ENCODE measurements at regions of chr19 and their contacts with region 1.

Region 1: DNA sequence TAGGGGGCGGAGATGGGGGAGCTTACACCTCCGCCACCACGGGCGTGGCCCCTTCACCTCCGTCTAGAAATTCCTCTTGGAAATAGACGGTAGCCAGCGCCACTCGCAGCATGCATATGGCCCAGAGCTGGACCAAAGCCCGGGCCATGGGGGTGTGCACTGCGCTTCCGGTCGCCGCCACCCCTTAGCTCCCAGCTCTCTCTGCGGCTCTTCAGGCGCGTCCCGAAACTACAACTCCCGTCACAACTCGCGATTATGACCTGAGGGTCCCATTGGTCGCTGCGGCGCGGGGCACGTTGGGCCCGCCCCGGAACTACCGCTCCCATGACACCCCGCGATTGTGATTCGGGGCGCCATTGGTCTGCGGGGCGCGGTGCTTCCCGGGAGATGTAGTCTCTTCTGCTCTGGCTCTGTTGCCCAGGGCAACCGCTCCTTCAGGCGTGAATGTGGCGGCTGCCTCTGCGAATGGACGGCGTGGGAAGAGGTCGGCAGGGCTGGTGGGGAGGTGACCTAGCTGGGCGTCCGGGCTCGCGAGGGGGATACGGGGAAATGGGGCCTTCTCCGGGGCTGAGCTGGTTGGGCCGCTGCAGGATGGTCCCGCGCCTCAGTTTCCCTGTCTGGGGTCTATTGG is at the starts of genes C19orf44 and CALR3:
- DNase-seq: peak; percentile 98
- H3K4me3 Mint-ChIP-seq: peak within 1 kb of the TSS; percentile 91
- H3K27ac Mint-ChIP-seq: peak within 1 kb of the TSS; percentile 68
- H3K4me1 Mint-ChIP-seq: peaks cover 9% of the 10 kb centered on the region
- H3K27me3 Mint-ChIP-seq: no peaks in the 10 kb centered on the region
- total RNA-seq, gene C19orf44: 3.8 and 3.9 TPM in 2 replicates
- total RNA-seq, gene CALR3: not detected in 2 replicates

Region 2: DNA sequence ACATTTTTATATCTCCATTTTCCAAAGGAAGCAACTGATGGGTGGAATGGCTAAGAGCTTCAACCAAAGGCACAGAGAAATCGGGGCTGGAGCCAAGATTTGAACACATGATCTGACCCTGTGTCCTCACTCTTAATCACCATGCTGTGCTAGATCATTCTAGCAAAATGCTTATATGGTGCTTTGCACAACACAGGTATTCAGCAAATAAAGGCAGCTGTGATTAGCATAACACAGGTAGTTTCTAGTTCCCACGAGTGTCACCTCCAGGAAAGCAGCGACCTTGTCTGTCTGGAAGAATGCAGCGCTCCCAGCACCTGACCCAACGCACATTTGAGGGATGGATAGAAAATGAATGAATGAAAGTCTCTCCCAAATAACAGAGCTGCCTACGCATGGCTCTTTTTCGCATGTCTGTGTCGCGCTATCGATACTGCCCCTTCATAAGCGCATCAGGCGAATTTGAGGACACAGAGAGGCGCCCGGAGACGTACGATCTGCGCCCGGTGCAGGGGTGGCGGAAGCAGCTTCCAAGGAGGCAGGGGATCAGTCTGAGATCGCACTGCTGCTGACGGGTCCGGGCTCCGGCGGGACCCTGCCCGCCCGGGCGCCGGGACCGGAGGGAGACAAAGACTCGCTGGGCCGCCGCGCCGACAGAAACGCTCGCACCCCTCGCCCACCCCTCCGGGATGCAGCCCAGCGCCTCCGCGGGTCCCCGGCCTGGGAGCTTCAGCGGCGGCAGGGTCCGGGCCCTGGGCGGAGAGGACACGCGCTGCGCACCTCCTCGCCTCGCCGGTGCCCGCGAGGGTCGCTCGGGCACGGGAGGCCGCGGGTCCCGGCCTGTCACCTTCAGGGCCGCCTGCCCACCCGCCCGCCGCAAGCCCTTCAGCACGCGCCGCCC is 24.9 kb before region 1 on chr19:
- intact Hi-C with region 1: loop called (anchors 1 kb)
- DNase-seq: peak; percentile 22
- H3K4me3 Mint-ChIP-seq: peak overlapping the region; percentile 87
- H3K27ac Mint-ChIP-seq: no peak overlapping the region
- H3K4me1 Mint-ChIP-seq: peaks cover 18% of the 10 kb centered on the region
- H3K27me3 Mint-ChIP-seq: peaks cover 3% of the 10 kb centered on the region

Region 3: DNA sequence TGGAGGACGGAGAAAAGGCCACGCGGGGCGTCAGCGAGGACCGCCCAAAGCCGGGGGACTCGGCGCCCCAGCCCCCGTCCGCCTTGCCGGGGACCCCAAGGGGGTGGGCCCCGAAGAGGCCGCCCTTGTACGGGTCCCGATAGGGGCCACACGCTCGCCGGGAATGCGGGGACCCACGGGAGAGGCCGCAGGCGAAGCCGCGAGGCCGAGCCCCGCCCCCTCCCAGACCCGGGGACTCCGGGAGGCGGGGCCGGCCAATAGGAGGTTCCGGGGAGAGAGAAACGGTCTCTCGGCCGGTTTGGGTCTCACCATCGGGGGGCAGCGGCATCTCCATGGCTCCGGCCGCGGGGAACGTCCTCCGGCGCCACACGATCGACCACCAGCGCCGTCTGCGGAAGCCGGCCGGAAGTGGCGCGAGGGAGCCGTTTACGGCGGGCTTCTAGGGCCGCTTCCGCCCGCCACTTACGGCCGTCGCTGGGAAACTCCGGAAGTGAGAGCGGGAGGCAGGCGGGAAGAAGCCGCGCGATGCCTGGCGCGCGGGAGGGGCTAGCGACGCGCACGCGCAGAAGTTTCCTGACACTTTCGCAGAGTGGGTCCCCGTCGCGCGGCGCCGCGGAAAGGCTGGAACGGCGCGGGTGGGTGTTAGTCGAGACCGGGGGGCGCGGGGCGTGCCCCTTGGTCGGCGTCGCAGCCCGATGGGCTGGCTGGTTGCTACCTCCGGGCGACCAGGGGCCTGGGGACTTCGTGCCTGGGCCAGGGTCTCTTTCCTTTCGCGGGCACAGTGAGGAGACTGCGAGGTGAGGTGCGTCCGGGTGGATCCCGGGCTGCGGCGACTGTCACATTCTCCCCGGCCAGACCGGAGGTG is 46.2 kb after region 1 on chr19 and contains the start of gene CHERP:
- intact Hi-C with region 1: loop called (anchors 2 kb)
- DNase-seq: peak; percentile 93
- H3K4me3 Mint-ChIP-seq: peak within 1 kb of the TSS; percentile 99
- H3K27ac Mint-ChIP-seq: peak within 1 kb of the TSS; percentile 95
- H3K4me1 Mint-ChIP-seq: peaks cover 28% of the 10 kb centered on the region
- H3K27me3 Mint-ChIP-seq: no peaks in the 10 kb centered on the region
- total RNA-seq, gene CHERP: 79.1 and 82.3 TPM in 2 replicates

Region 4: GRCh38 chr19:16572332-16573211 is 76.5 kb after region 1 on chr19 and contains the start of gene SLC35E1:
- intact Hi-C with region 1: loop called (anchors 5 kb)
- DNase-seq: peak; percentile 92
- H3K4me3 Mint-ChIP-seq: peak within 1 kb of the TSS; percentile 97
- H3K27ac Mint-ChIP-seq: peak within 1 kb of the TSS; percentile 93
- H3K4me1 Mint-ChIP-seq: peaks cover 39% of the 10 kb centered on the region
- H3K27me3 Mint-ChIP-seq: no peaks in the 10 kb centered on the region
- total RNA-seq, gene SLC35E1: 55.3 and 56.0 TPM in 2 replicates

Region 5: DNA sequence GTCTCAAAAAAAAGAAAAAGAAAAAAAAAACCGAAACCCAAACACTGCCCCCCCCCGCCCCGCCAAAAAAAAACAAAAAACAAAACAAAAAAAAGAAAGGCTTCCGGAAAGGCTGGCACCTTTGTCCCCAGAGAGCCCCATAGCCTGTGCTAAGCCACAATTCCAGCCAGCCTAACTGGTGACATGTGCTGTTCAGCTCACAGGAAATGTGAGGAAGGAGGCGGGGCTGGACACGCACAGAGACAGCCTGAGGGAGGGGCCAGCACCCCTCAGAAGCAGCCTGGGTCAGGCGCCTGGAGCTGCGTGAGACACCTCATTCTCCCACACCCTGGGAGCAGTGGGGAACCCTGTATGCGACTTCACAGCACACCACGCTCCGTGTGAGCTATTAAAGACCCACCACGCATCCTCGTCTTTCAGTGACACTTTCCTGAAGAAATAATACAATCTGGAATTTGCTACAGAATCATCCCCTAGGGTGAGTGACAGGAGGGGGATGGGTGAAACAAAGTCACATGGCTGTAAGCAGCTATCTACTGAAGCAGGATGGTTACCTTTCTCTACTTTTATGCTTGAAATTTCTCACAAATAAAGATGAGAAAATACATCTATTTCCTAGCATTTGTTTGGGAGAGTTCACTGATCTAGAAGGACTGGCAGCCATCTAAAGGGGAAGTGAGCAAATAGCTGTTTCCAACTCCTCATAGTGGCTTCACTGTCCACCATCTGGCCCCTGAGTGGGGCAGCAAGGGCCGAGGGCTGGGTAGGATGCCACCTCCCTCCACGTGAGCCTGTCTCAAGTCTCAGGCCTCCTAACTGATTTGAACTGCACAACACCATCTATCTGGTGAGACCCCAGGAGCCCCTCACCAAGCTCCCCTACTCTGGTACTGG is 88.4 kb after region 1 on chr19:
- intact Hi-C with region 1: loop called (anchors 1 kb)
- DNase-seq: peak; percentile 88
- H3K4me3 Mint-ChIP-seq: peak overlapping the region; percentile 77
- H3K27ac Mint-ChIP-seq: peak overlapping the region; percentile 90
- H3K4me1 Mint-ChIP-seq: peaks cover 66% of the 10 kb centered on the region
- H3K27me3 Mint-ChIP-seq: no peaks in the 10 kb centered on the region